Gastrocnemius medialis (tissue), 4 donors: ENCODE measurements at regions of chr7 and their contacts with region 1.

Region 1: DNA sequence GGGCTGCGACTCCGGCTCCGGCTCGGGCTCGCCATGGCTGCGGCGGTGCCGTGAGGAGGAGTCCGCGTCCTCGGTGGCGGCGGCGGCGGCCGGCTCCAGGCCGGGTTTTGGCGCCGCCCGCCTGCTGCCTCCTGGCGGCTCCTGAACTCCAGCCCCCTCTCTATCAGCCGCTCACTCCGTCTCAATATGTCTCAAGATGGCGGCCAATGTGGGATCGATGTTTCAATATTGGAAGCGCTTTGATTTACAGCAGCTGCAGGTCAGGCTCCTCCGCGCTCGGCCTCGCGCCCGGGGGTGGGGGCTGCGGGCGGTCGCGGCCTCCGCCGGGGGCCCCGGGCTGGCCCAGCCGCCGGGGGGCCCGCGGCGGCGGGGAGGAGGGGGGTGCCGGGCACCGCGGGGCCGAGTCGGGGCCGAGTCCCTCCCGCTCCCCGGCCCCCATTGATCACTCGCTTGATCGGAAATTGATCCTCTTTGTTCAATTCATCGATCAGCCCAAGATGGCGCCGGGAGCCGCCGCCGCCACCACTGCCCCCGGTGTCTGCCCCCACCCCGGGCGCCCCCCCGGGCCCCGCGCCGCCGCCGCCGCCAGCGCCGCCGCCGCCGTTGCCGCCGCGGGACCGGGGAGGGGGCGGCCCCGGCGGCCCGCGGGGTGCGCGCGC is 1.5 kb upstream of the CUX1 start:
- DNase-seq: peak; percentile 59 to 71
- ATAC-seq: peak; percentile 73 to 75
- H3K4me3 ChIP-seq: peak overlapping the region; percentile 50 to 81 (median 74)
- H3K27ac ChIP-seq: peak overlapping the region; percentile 74 to 86 (median 86)
- H3K4me1 ChIP-seq: peaks cover 23 to 28% of the 10 kb centered on the region in 2 donors
- H3K27me3 ChIP-seq: no peaks in the 10 kb centered on the region
- CTCF ChIP-seq: peak in 2 of 5 experiments; percentile 5 to 16
- POLR2A ChIP-seq: no peak

Region 2: DNA sequence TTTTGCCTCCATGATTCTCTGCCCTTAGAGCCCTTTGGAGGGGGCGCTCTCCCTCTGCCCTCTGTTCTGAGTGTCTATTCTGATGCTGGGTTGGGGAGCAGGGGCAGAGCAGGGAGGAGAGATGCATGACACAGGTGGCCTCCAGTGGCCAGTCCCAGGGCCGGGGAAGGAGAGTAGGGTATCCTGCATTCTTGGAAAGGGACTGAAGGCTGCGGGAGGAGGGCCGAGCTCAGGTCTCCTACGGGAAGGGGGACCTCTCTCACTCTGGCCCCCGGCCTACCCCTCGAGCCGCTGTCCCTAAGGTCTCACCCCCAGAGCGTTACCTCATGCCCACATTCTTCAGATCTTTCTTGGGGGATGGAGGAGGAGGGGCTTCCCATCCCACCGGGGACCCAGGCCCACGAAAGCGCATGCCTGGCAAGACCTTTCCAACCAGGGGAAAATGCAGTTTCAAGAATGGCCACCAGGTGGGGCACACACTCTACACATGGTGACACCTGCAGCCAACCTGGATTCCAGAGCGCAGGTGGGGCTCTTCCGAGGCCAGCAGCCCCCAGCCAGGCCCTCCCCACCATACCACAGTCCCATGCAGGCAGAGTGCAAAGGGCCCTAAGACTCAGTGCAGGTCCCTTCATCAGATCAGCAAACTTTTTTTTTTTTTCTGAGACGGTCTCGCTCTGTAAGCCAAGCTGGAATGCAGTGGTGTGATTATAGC is 273.3 kb before region 1 on chr7:
- in situ Hi-C with region 1: no loop called
- intact Hi-C with region 1: loop called (anchors 5 kb)
- DNase-seq: peak; percentile 11 to 42
- ATAC-seq: peak; percentile 58 to 67
- H3K4me3 ChIP-seq: no peak overlapping the region
- H3K27ac ChIP-seq: no peak overlapping the region
- H3K4me1 ChIP-seq: no peaks in the 10 kb centered on the region
- H3K27me3 ChIP-seq: no peaks in the 10 kb centered on the region
- CTCF ChIP-seq: peak; percentile 79 to 94 (median 89)
- POLR2A ChIP-seq: no peak

Region 3: GRCh38 chr7:101688183-101688831 is 127.7 kb before region 1 on chr7:
- in situ Hi-C with region 1: loop called in 2 of 4 experiments (anchors 25 kb)
- intact Hi-C with region 1: loop called (anchors 1 kb)
- DNase-seq: peak; percentile 40 to 60
- ATAC-seq: peak; percentile 80 to 82
- H3K4me3 ChIP-seq: peak overlapping the region; percentile 23 to 37 (median 28)
- H3K27ac ChIP-seq: no peak overlapping the region
- H3K4me1 ChIP-seq: peaks cover 5 to 6% of the 10 kb centered on the region in 2 donors
- H3K27me3 ChIP-seq: no peaks in the 10 kb centered on the region
- CTCF ChIP-seq: peak; percentile 90 to 98 (median 96)
- POLR2A ChIP-seq: no peak

Region 4: DNA sequence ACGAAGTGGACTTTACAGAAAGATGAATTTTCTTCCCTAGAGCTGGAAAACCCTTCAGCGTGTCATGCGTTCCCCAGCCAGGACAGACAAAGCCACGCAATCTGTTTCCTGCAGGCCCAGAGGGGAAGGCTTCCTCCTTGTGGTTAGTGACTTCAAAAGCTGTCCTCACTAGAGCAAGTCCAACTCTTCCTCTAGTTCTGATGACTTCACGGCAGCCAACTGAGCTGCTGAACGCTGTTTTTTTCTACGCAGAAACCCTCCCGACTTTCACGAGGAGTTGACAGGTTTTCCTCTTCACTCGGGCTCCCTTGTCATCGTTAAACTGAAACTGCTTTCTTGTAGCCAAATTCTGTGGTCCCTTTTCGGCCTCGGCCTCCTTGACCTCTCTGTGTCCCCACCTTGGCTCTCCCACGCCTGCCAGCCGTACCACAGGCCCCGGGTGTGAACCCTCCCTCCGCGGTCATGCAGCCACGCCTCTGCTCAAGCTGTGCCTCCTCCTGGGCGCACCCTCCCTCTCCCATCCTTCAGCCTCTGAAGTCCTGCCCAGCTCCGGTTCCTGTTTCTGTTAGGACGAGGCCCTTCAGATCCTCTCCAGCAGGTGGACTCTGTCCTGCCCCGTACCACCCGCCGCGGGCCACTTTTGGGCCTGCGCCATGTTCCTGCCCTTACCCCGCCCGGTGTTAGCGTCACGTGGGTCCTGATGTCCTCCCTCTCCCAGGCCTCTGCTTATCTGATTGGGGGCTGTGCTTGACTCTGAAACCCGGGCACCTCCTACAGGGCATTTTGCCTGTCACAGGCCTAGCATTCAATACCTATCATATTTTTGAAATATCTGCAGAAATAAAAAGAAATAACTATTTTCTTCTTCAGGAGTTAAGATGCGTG is 40.8 kb after region 1 on chr7:
- in situ Hi-C with region 1: no loop called
- intact Hi-C with region 1: loop called (anchors 1 kb)
- DNase-seq: peak; percentile 87 to 95
- ATAC-seq: peak; percentile 84 to 88
- H3K4me3 ChIP-seq: peak overlapping the region; percentile 30 to 53 (median 46)
- H3K27ac ChIP-seq: peak overlapping the region; percentile 84 to 93 (median 91)
- H3K4me1 ChIP-seq: peaks cover 57 to 64% of the 10 kb centered on the region in 2 donors
- H3K27me3 ChIP-seq: no peaks in the 10 kb centered on the region
- CTCF ChIP-seq: peak; percentile 51 to 77 (median 76)
- POLR2A ChIP-seq: peak; percentile 31 to 59

Region 5: GRCh38 chr7:101985903-101986734 is 170.2 kb after region 1 on chr7:
- in situ Hi-C with region 1: no loop called
- intact Hi-C with region 1: loop called (anchors 5 kb)
- DNase-seq: peak; percentile 30 to 65
- ATAC-seq: peak; percentile 91 to 93
- H3K4me3 ChIP-seq: peak overlapping the region in 1 of 4 donors; percentile 27
- H3K27ac ChIP-seq: peak overlapping the region; percentile 64 to 76 (median 73)
- H3K4me1 ChIP-seq: peaks cover 18 to 19% of the 10 kb centered on the region in 2 donors
- H3K27me3 ChIP-seq: no peaks in the 10 kb centered on the region
- CTCF ChIP-seq: no peak
- POLR2A ChIP-seq: no peak